A673 (cell line): ENCODE measurements at regions of chr10 and their contacts with region 1.

Region 1: DNA sequence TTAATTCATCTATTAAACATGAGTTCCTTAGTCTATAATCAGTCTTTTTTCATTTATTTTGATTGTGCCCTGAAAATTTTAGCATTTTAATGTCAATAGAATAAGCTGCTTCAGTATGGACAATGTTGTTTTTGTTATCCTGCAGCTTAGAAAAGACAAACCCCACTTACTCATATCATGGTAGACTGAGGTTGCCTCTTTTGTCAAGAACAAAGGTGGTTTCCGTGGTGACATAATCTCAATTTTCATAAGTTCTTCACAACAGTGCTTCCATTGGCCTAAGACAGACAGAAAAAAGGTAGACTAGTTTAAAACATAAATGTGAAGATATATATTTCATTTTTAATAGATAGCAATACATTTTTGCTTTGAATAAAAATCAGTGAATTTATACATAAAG is 69.1 kb downstream of the RTKN2 start:
- DNase-seq: no peak
- H3K4me3 ChIP-seq: no peak overlapping the region
- H3K27ac ChIP-seq: no peak overlapping the region
- H3K4me1 ChIP-seq: peaks cover 51% of the 10 kb centered on the region
- H3K27me3 ChIP-seq: no peaks in the 10 kb centered on the region
- CTCF ChIP-seq: no peak

Region 2: GRCh38 chr10:61750929-61751471 is 448.6 kb before region 1 on chr10:
- CTCF ChIA-PET with region 1: interaction called, 9 read pairs
- POLR2A ChIA-PET with region 1: no interaction called
- intact Hi-C with region 1: loop called (anchors 5 kb)
- DNase-seq: peak; percentile 83
- H3K4me3 ChIP-seq: no peak overlapping the region
- H3K27ac ChIP-seq: peak overlapping the region; percentile 78
- H3K4me1 ChIP-seq: peaks cover 70% of the 10 kb centered on the region
- H3K27me3 ChIP-seq: no peaks in the 10 kb centered on the region
- CTCF ChIP-seq: peak; percentile 87

Region 3: GRCh38 chr10:61992671-61993668 is 206.6 kb before region 1 on chr10:
- CTCF ChIA-PET with region 1: no interaction called
- POLR2A ChIA-PET with region 1: no interaction called
- intact Hi-C with region 1: loop called (anchors 2 kb)
- DNase-seq: peak; percentile 94
- H3K4me3 ChIP-seq: peak overlapping the region; percentile 40
- H3K27ac ChIP-seq: peak overlapping the region; percentile 84
- H3K4me1 ChIP-seq: peaks cover 54% of the 10 kb centered on the region
- H3K27me3 ChIP-seq: no peaks in the 10 kb centered on the region
- CTCF ChIP-seq: no peak

Region 4: GRCh38 chr10:62099299-62099698 is 100.3 kb before region 1 on chr10:
- CTCF ChIA-PET with region 1: no interaction called
- POLR2A ChIA-PET with region 1: interaction called, 31 read pairs
- intact Hi-C with region 1: no loop called
- DNase-seq: no peak
- H3K4me3 ChIP-seq: no peak overlapping the region
- H3K27ac ChIP-seq: no peak overlapping the region
- H3K4me1 ChIP-seq: peaks cover 26% of the 10 kb centered on the region
- H3K27me3 ChIP-seq: no peaks in the 10 kb centered on the region
- CTCF ChIP-seq: no peak

Region 5: GRCh38 chr10:62268399-62269114 is 69.0 kb after region 1 on chr10 and contains the start of gene RTKN2:
- CTCF ChIA-PET with region 1: no interaction called
- POLR2A ChIA-PET with region 1: no interaction called
- intact Hi-C with region 1: no loop called
- DNase-seq: peak; percentile 95
- H3K4me3 ChIP-seq: peak within 1 kb of the TSS; percentile 91
- H3K27ac ChIP-seq: peak within 1 kb of the TSS; percentile 73
- H3K4me1 ChIP-seq: peaks cover 37% of the 10 kb centered on the region
- H3K27me3 ChIP-seq: no peaks in the 10 kb centered on the region
- CTCF ChIP-seq: no peak
- total RNA-seq, gene RTKN2: 21.9 and 22.3 TPM in 2 replicates

Region 6: DNA sequence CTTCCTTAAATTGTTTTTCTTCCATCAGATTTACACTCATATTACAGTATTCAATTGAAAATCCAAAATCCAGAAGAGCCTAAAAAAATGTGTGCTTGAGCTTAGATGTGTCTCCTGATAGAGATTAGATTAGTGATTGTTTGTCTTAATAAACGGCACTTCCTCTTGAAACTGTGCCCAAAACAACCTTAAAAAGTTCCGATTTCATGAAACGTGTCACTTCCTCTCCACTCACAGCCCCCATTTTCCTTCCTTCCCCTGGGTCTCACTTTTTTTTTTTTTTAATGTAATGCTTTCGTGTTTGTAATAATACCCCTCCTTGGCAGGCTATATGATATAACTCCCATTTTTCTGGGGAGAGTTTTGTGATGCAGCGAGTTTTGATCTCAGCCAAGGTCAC is 490.1 kb after region 1 on chr10:
- CTCF ChIA-PET with region 1: interaction called, 6 read pairs
- POLR2A ChIA-PET with region 1: no interaction called
- intact Hi-C with region 1: loop called (anchors 5 kb)
- DNase-seq: peak; percentile 81
- H3K4me3 ChIP-seq: no peak overlapping the region
- H3K27ac ChIP-seq: peak overlapping the region; percentile 94
- H3K4me1 ChIP-seq: peaks cover 51% of the 10 kb centered on the region
- H3K27me3 ChIP-seq: no peaks in the 10 kb centered on the region
- CTCF ChIP-seq: no peak